ENCODE measurements at regions of chr5 and their contacts with region 1.

Region 1: DNA sequence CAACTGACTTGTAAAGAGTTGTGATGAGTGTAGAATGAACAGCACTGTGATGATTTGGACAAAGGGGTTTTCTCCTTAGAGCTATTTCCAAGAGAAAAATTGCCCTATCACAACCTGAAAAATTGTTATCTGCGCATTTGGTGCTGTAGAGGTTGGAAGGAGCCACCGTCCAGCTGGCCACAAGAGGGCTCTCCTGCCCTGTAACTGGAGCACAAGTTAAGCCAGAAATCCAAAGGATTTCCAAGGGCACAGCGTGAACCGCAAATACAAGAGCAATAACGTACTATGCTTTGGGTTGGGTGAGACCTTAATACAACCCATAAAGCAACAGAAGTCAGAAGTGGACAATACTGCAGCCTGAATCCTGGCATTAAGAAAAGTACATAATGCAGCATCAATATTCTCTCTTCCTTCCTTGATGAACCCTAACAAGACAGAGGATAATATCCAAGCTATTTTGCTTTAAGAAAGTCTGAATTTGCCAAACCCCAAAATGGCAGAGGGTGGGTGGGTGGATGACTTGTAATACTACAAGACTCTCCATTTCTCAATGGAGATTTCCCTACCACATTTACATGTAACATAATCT is 56.8 kb upstream of the SMIM32 start:
- H3K4me3 Mint-ChIP-seq: no peak overlapping the region
- H3K27ac Mint-ChIP-seq: no peak overlapping the region
- H3K4me1 Mint-ChIP-seq: no peaks in the 10 kb centered on the region
- H3K27me3 Mint-ChIP-seq: peaks cover 2% of the 10 kb centered on the region

Region 2: DNA sequence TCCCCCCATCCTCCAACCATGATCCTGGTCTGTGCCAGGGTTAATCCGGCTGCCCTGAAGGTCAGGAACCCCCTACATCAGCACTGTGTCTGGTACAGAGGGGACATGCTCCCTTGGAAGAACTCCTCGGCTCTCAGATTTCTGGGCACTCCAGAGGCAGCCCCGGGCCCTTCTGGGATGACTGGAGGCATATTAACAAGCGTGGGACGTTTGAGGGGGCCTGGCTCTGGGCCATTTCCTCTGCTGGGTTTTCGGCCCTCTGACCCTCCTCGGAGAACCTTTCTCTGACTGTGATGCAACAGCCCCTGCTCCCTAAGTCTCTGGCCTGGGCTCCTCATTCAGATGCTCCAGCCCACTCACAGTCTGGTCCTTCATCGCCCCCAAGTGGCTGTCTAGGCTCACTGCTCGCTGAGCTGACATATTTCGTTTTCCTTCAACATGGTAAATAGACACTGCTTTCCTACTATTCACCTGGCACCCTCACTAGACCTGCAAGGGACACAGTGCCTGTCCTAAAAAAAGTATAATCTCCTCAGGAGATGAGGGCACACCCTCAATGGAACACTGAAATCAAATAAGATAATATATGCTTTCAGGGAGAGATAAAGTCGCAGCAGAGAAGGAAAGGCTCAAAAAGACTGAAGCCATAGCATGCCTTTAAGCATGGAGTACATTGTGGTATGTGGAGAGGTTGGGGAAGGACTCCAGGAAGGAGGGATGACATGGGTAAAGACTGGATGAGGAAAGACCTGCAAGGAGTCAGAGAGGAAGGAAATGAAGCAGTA is 520.3 kb after region 1 on chr5:
- intact Hi-C with region 1: loop called (anchors 5 kb)
- H3K4me3 Mint-ChIP-seq: no peak overlapping the region
- H3K27ac Mint-ChIP-seq: no peak overlapping the region
- H3K4me1 Mint-ChIP-seq: no peaks in the 10 kb centered on the region
- H3K27me3 Mint-ChIP-seq: no peaks in the 10 kb centered on the region